ENCODE measurements at regions of chr1 and their contacts with region 1.

Region 1: GRCh38 chr1:201792534-201793305 is 36.2 kb upstream of the IPO9 start:
- DNase-seq: peak; percentile 55 to 72 (median 71)
- H3K4me3 ChIP-seq: no peak overlapping the region
- H3K4me3 Mint-ChIP-seq: no peak overlapping the region
- H3K27ac ChIP-seq: no peak overlapping the region
- H3K27ac Mint-ChIP-seq: peak overlapping the region in 3 of 7 donors; percentile 24 to 56 (median 47)
- H3K4me1 ChIP-seq: peaks cover 35 to 36% of the 10 kb centered on the region in 2 donors
- H3K4me1 Mint-ChIP-seq: peaks cover 40% of the 10 kb centered on the region
- H3K27me3 ChIP-seq: no peaks in the 10 kb centered on the region
- H3K27me3 Mint-ChIP-seq: peaks cover 0 to 4% (median 0%) of the 10 kb centered on the region in 3 donors
- CTCF ChIP-seq: peak; percentile 98

Region 2: DNA sequence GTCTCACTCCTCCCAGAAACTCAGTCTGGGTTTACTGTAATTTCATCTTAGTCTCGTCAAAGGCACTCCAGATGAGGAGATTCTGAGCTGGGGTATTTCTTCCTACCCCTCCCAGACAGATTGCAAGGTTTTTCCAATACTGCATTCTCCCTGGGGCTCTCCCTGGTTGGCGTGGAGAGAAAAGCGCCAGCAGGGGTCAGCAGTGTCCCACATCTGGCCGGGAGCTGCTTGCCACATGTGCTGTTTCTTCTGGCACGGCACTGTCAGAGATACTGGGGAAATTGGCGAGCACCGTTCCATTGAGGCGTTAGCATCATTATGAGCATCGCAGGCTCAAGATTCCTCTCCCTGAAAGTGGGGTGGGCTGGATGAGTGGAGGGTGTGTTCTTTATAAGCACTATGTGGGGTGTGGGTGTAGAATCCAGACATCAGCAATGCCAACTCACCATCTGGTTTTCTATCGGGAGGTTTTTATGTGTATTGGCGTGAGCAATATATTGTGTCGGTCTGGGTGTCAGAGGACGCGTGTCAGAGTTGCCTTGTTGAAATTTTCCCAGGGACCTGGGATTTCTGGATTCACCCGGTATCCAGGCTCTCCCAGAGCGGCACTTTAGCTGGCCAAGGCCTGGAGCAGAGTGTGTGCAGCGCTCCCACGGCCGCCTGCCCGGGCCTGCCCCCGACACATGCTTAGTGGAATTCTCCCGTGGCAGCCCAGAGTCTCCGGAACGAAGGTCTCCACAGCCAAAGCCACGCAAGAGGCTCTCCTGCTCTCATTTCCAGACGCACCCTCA is 261.8 kb before region 1 on chr1:
- intact Hi-C with region 1: loop called (anchors 5 kb)
- DNase-seq: peak; percentile 55 to 70 (median 66)
- H3K4me3 ChIP-seq: no peak overlapping the region
- H3K4me3 Mint-ChIP-seq: peak overlapping the region; percentile 16 to 51
- H3K27ac ChIP-seq: no peak overlapping the region
- H3K27ac Mint-ChIP-seq: no peak overlapping the region
- H3K4me1 ChIP-seq: peaks cover 12% of the 10 kb centered on the region in 2 donors
- H3K4me1 Mint-ChIP-seq: peaks cover 16% of the 10 kb centered on the region
- H3K27me3 ChIP-seq: no peaks in the 10 kb centered on the region
- H3K27me3 Mint-ChIP-seq: peaks cover 0 to 6% (median 1%) of the 10 kb centered on the region in 3 donors
- CTCF ChIP-seq: peak; percentile 84

Region 3: DNA sequence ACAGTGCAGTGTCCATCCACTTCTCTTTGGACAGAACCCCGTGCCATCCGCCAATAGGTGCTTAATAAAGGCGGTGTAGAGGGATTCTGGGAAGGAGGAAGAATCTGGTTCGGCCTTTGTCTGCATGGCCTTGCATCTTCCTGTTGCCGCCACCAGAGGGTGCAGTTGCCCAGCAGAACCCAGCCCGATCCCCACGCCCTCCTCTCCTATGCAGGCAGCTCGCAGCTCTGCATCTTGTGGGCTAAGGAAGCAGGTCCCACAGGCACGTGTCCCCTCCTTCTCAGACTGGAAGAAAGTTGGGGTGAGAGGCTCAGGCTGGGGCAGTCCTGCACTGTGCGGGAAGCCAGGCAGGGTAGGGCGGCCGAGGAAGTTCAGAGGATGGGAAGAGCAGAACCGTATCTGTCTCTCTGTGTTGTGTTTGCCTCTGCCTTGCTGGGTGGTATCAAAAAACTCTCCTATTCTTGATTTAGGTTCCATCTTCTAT is 233.0 kb before region 1 on chr1:
- intact Hi-C with region 1: loop called (anchors 1 to 5 kb)
- DNase-seq: peak; percentile 64 to 78 (median 72)
- H3K4me3 ChIP-seq: no peak overlapping the region
- H3K4me3 Mint-ChIP-seq: no peak overlapping the region
- H3K27ac ChIP-seq: no peak overlapping the region
- H3K27ac Mint-ChIP-seq: peak overlapping the region in 1 of 7 donors; percentile 54
- H3K4me1 ChIP-seq: peaks cover 3 to 9% of the 10 kb centered on the region in 2 donors
- H3K4me1 Mint-ChIP-seq: peaks cover 20% of the 10 kb centered on the region
- H3K27me3 ChIP-seq: no peaks in the 10 kb centered on the region
- H3K27me3 Mint-ChIP-seq: peaks cover 2 to 5% (median 3%) of the 10 kb centered on the region in 3 donors
- CTCF ChIP-seq: peak; percentile 91

Region 4: DNA sequence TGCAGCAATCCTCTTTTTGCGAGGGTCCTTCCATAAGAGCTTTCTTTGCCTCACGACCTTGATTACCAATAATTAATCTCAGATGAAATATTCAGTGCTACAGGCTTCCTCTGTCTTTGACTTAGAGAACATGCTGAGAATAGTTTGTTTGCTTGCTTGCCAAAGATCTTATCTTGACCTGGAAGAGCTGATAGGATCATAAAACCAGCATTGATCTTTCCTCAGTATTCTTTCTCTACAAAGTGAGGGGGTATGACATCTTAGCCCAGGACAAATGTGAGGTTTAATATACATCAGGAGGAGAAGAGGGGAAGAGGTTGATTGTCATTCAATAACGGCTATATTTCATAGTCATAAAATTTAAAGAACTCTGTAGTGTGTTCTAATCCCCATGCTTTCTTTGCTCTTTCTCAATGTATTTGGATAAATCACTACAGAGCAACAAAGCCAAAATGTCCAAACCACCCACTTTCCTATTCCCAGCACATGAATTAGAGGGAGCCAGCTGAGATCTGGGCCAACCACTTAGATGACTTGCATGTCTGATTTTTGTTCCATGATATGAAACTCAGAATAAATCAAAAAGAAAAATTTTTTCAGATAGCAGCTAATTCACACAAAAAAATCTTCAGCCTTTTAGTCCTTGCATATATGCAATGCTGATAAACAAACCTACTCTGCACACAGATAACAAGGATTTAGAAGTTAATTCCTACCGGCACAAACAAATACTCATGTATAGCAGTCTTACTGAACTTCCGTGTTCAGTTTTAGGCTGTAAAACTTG is 14.2 kb before region 1 on chr1:
- intact Hi-C with region 1: no loop called
- DNase-seq: no peak
- H3K4me3 ChIP-seq: no peak overlapping the region
- H3K4me3 Mint-ChIP-seq: no peak overlapping the region
- H3K27ac ChIP-seq: no peak overlapping the region
- H3K27ac Mint-ChIP-seq: no peak overlapping the region
- H3K4me1 ChIP-seq: no peaks in the 10 kb centered on the region
- H3K4me1 Mint-ChIP-seq: no peaks in the 10 kb centered on the region
- H3K27me3 ChIP-seq: no peaks in the 10 kb centered on the region
- H3K27me3 Mint-ChIP-seq: peaks cover 0 to 3% (median 1%) of the 10 kb centered on the region in 3 donors
- CTCF ChIP-seq: no peak

Region 5: DNA sequence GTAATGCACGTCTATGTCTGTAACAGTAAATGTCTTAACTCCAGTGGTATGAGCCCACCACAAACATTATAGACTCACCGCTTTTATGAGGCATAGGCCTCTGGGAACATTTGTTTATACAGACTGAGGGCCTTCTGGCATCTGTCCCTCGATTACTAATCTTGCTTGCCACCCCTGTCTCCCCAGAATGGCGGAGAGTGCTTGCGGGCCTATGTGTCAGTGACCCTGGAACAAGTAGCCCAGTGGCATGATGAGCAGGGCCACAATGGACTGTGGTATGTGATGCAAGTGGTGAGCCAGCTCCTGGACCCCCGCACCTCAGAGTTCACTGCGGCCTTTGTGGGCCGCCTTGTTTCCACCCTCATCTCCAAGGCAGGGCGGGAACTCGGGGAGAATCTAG is 77.7 kb after region 1 on chr1:
- intact Hi-C with region 1: no loop called
- DNase-seq: no peak
- H3K4me3 ChIP-seq: no peak overlapping the region
- H3K4me3 Mint-ChIP-seq: no peak overlapping the region
- H3K27ac ChIP-seq: no peak overlapping the region
- H3K27ac Mint-ChIP-seq: no peak overlapping the region
- H3K4me1 ChIP-seq: peaks cover 0 to 3% of the 10 kb centered on the region in 2 donors
- H3K4me1 Mint-ChIP-seq: peaks cover 7% of the 10 kb centered on the region
- H3K27me3 ChIP-seq: no peaks in the 10 kb centered on the region
- H3K27me3 Mint-ChIP-seq: peaks cover 0 to 2% (median 0%) of the 10 kb centered on the region in 3 donors
- CTCF ChIP-seq: no peak

Region 6: DNA sequence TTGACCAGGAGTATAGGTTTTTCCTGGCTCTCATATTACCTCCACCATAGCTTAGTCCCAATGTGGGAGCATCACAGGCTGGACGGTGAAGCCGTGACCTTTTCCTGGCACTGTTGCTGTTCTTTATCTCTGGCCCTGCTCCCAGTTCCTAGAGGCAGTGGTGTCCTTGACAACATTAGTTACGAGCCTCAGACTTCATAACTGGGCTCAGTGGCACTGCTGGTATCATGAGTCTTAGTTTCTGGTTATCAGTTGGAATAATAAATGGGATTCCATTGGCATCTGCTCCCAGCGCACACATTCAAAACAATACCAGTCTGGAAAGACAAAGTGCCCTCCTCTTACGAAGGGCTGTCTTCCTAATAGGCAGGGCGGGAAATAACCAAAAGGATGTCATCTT is 197.7 kb after region 1 on chr1:
- intact Hi-C with region 1: no loop called
- DNase-seq: no peak
- H3K4me3 ChIP-seq: no peak overlapping the region
- H3K4me3 Mint-ChIP-seq: no peak overlapping the region
- H3K27ac ChIP-seq: no peak overlapping the region
- H3K27ac Mint-ChIP-seq: no peak overlapping the region
- H3K4me1 ChIP-seq: no peaks in the 10 kb centered on the region
- H3K4me1 Mint-ChIP-seq: peaks cover 3% of the 10 kb centered on the region
- H3K27me3 ChIP-seq: no peaks in the 10 kb centered on the region
- H3K27me3 Mint-ChIP-seq: peaks cover 0 to 2% (median 1%) of the 10 kb centered on the region in 3 donors
- CTCF ChIP-seq: no peak

Measured in CD14-positive monocyte (primary cell).